Activated naive CD4-positive, alpha-beta T cell treated with anti-CD3 and anti-CD28 coated beads for 36 hours (primary cell): ENCODE measurements at regions of chr15 and their contacts with region 1.

Region 1: GRCh38 chr15:79596051-79596507 is 163.9 kb downstream of the MINAR1 start:
- DNase-seq: peak; percentile 75
- H3K4me3 Mint-ChIP-seq: no peak overlapping the region
- H3K27ac Mint-ChIP-seq: no peak overlapping the region
- H3K4me1 Mint-ChIP-seq: no peaks in the 10 kb centered on the region
- H3K27me3 Mint-ChIP-seq: peaks cover 10% of the 10 kb centered on the region

Region 2: DNA sequence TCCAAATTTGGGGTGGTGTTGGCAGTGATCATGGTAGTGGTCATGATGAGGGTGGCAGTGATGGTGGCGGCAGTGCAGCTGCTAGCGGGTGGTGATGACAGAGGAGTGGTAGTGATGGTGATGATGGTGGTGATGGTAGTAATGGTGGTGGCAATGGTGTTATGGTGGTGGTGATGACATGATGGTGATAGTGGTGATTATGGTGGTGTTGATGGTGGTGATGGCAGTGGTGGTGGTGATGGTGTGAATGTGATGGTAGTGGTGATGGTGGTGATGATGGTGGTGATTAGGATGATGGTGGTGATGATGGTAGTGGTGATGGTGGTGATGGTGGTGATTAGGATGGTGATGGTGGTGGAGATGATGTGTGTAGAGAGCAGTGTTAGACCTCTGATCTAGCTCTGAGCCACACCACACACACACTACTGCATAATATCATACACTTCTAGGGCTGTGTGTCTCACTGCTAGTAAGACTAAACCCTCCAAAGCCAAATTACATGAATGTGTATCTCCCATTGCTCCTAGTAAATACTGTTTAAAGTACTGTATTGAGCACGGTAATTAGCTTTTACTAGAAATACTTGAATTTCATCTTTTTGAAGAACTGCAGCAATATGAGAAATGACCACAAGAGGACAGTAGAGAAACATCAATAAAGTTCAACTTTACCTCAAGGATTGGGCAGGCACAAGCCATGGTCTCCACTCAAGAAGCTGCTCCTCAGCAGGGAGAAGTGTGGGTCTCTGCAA is 256.3 kb before region 1 on chr15:
- CTCF ChIA-PET with region 1: interaction called, 15 read pairs
- intact Hi-C with region 1: loop called (anchors 1 kb)
- DNase-seq: no peak
- H3K4me3 Mint-ChIP-seq: no peak overlapping the region
- H3K27ac Mint-ChIP-seq: no peak overlapping the region
- H3K4me1 Mint-ChIP-seq: no peaks in the 10 kb centered on the region
- H3K27me3 Mint-ChIP-seq: no peaks in the 10 kb centered on the region

Region 3: DNA sequence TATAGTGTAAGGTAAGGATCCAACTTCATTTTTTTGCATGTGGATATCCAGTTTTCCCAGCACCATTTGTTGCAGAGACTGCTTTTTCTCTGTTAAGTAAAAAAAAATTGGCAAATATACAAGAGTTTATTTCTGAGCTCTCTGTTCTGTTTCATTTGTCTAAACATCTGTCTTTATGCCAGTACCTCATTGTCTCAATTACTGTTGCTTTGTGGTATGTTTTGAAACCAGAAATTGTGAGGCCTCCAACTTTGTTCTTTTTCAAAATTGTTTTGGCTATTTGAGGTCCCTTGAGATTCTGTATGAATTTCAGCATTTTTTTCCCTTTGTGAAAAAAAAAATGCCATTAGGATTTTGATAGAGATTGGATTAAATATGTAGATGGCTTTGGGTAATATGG is 13.4 kb before region 1 on chr15:
- CTCF ChIA-PET with region 1: interaction called, 12 read pairs
- intact Hi-C with region 1: no loop called
- DNase-seq: no peak
- H3K4me3 Mint-ChIP-seq: no peak overlapping the region
- H3K27ac Mint-ChIP-seq: no peak overlapping the region
- H3K4me1 Mint-ChIP-seq: no peaks in the 10 kb centered on the region
- H3K27me3 Mint-ChIP-seq: peaks cover 26% of the 10 kb centered on the region